Posterior cingulate gyrus (tissue), 11 donors: ENCODE measurements at regions of chr20 and their contacts with region 1.

Region 1: GRCh38 chr20:45293041-45294002 is 13.3 kb upstream of the RBPJL start:
- DNase-seq: peak; percentile 58 to 97 (median 84)

Region 2: DNA sequence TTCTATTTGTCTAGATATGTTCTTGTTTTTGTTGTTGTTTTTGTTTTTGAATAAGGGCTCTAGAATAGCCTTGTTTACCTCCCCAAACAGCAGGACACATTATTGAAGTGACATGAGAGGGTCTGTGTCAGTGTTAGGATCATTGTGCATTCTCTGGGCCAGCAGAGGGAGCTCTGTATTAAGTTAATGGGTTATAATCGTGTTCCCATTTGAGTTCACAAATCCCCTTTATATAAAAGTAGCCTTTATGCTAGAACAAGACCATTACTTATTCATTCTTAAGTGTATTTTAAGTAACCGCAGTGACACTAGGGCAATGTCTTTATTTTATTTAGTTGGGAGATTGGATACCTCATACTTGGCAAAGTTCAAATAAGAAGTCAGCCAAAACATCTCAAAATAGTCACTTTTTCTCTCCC is 282.2 kb before region 1 on chr20:
- intact Hi-C with region 1: loop called (anchors 5 kb)
- DNase-seq: peak in 5 of 10 donors; percentile 25 to 67 (median 60)

Region 3: DNA sequence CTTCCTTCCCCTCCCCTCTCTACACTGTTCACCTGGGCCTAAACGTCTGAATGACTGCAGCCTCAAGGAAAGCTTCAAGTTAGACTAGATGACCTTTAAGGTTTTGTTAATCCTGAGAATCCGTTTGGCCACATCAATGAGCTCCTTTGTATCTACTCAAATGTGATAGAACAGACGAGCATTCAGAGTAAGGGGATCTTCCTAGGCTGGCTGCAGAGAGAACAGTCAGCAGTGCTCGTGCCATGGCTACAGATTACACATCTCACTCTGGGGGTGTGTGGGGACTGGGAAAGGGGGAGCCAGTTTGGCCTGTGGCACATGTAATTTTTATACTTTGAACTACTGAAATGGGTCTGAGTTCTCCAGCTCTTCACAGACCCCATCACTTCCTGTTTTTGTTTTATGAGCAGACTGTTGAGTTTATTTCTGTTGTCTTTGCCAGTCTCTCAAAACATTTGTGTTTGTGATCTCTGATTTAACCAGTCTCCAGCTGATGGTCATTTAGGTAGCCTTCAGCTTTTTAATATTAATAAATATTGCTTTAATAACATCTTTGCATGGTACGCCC is 243.3 kb before region 1 on chr20:
- intact Hi-C with region 1: loop called (anchors 5 kb)
- DNase-seq: peak in 7 of 10 donors; percentile 39 to 91 (median 54)

Region 4: GRCh38 chr20:45095753-45096371 is 197.5 kb before region 1 on chr20:
- intact Hi-C with region 1: loop called (anchors 5 kb)
- DNase-seq: peak in 6 of 10 donors; percentile 41 to 88 (median 59)

Region 5: GRCh38 chr20:45850926-45851325 is 557.6 kb after region 1 on chr20:
- intact Hi-C with region 1: no loop called
- DNase-seq: no peak